Right ventricle myocardium inferior (tissue), 1 donor: ENCODE measurements at regions of chr1 and their contacts with region 1.

Region 1: GRCh38 chr1:93846211-93846991 is 32.6 kb downstream of the DNTTIP2 start:
- DNase-seq: peak; percentile 97
- ATAC-seq: peak; percentile 77

Region 2: GRCh38 chr1:93345633-93346420 is 500.6 kb before region 1 on chr1 and contains the start of gene DR1:
- intact Hi-C with region 1: loop called (anchors 5 kb)
- DNase-seq: peak; percentile 96
- ATAC-seq: peak; percentile 97
- total RNA-seq, gene DR1: 37.1 TPM

Region 3: GRCh38 chr1:93437976-93438605 is 408.3 kb before region 1 on chr1:
- intact Hi-C with region 1: loop called (anchors 2 kb)
- DNase-seq: no peak
- ATAC-seq: no peak

Region 4: DNA sequence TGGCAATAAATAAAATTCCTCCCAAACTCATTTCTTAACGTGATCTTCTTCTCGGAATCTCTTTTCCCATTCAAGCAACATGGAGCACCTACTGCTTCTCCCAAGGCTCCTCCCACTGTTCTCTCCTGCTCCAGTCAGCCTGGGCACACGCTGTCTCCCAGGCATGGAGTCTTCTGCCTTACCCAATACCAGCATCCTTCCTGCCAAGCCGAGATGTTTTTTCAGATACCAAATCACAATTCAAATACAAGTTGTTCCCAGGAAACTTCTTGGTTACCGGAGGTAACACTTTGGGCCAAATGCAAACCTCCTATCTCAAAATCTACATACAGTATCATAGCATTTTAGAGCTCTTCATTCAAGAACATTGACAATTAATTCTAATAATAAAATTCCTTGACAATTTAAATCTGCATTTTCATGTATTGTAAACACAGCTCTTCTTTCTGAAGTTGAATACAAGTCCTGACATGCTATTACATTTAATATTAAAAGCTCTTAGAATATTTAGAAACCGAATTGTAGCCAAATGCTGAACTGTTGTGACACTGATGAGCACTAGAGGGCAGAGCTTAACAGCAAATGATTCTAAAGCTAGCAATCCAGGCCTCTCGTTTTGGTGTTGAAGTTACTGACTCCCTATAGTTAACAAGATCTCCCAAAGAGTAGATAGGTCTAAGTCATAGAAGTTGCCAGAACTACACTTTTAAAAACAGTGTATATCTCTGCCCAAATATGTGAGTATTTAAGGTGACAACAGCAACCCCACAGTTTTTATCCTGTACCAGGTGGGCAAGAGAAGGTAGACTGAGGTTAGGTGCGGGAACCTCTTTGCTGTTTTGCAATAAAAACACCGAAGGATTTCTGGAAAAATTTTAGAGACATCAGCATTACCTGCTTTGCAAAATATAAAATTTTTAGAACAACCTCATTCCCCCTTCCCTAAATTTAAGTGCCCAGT is 217.0 kb before region 1 on chr1:
- intact Hi-C with region 1: loop called (anchors 2 kb)
- DNase-seq: no peak
- ATAC-seq: peak; percentile 59

Region 5: GRCh38 chr1:93904228-93904627 is 57.8 kb after region 1 on chr1:
- intact Hi-C with region 1: no loop called
- DNase-seq: no peak
- ATAC-seq: no peak

Region 6: DNA sequence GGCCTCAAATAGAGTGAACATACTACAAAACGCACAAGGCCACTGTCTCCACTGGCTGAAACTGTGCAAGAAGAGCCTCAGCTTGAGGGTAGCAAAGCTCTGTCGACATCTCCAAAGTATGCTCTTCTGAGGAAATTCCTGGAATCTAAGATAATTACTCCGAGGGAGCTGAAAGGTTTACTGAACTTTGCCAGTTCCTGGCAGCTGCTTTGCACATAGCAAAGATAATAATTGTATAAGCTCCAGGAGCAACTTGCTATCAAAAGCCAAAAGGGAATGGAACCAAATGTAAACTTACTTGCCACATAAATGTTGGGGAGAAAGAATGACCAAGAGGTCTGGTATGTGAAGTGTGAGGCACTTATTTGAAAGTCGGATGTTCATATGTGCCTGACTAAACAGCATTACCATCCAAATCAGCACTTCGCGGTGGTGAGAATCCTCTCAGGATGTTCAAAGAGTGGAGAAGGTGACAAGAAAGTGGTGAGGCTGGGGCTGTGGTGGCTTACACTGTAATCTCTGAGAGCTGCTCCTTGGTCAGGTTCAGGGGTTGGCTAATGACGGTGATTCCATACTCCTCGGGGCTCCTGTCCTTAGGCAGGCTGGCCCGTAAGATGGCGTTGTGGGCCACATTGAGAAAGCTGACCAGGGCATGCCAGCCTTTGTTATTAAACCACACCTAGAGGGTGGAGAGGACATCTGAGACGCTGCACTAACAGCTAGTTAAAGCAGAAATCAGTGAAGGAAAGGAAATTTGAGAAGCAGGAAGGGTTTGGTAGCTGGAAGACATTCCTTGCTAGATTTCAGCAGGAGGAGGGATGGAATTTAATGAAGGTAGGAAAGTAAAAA is 174.6 kb after region 1 on chr1:
- intact Hi-C with region 1: no loop called
- DNase-seq: no peak
- ATAC-seq: peak; percentile 38